ENCODE measurements at regions of chr17 and their contacts with region 1.

Region 1: GRCh38 chr17:39153599-39154051 is 2.2 kb upstream of the PLXDC1 start:
- DNase-seq: peak; percentile 94
- ATAC-seq: peak; percentile 43
- H3K4me3 Mint-ChIP-seq: peak overlapping the region; percentile 95
- H3K27ac Mint-ChIP-seq: peak overlapping the region; percentile 95
- H3K4me1 Mint-ChIP-seq: peaks cover 40% of the 10 kb centered on the region
- H3K27me3 Mint-ChIP-seq: peaks cover 2% of the 10 kb centered on the region

Region 2: GRCh38 chr17:38752119-38752929 is 401.3 kb before region 1 on chr17 and contains the start of gene PSMB3:
- CTCF ChIA-PET with region 1: no interaction called
- POLR2A ChIA-PET with region 1: no interaction called
- intact Hi-C with region 1: loop called (anchors 1 kb)
- DNase-seq: peak; percentile 99
- ATAC-seq: peak; percentile 95
- H3K4me3 Mint-ChIP-seq: peak within 1 kb of the TSS; percentile 93
- H3K27ac Mint-ChIP-seq: peak within 1 kb of the TSS; percentile 99
- H3K4me1 Mint-ChIP-seq: peaks cover 43% of the 10 kb centered on the region
- H3K27me3 Mint-ChIP-seq: peaks cover 23% of the 10 kb centered on the region
- total RNA-seq, gene PSMB3: 337 to 396 TPM

Region 3: DNA sequence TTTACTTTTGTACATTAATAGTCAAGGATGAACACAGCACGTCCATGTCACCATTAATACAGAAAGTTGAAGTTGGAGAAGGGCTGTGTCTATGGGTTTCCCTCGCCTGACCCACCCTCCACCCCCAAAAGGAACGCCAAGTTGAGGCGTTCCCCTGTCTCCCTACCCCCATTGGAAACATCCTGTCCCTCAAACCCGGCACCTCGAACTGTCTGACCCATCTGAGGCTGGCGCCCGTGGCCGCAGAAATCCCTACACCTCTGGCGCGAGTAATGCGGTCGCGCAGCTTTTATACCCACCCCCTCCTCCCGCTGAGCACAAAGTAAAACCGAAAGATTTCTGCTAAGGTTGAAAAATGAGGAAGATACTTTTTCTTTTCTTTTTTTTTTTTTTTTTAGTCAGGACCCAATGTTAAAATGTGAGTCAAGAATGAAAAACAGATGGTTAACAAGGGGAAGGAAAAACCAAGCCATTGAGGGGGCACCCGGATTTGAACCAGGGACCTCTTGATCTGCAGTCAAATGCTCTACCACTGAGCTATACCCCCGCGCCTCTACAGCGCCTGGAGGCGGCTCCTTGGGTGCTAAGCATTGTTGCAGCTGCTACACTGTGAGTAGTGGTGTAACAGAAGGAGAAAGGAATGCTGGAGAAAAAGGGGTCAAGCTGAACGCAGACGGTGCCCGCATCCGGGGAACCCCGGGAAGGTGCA is 284.7 kb before region 1 on chr17:
- CTCF ChIA-PET with region 1: interaction called, 9 read pairs
- POLR2A ChIA-PET with region 1: interaction called, 5 read pairs
- intact Hi-C with region 1: loop called (anchors 1 kb)
- DNase-seq: peak; percentile 95
- ATAC-seq: peak; percentile 56
- H3K4me3 Mint-ChIP-seq: peak overlapping the region; percentile 93
- H3K27ac Mint-ChIP-seq: peak overlapping the region; percentile 93
- H3K4me1 Mint-ChIP-seq: peaks cover 44% of the 10 kb centered on the region
- H3K27me3 Mint-ChIP-seq: peaks cover 2% of the 10 kb centered on the region

Region 4: DNA sequence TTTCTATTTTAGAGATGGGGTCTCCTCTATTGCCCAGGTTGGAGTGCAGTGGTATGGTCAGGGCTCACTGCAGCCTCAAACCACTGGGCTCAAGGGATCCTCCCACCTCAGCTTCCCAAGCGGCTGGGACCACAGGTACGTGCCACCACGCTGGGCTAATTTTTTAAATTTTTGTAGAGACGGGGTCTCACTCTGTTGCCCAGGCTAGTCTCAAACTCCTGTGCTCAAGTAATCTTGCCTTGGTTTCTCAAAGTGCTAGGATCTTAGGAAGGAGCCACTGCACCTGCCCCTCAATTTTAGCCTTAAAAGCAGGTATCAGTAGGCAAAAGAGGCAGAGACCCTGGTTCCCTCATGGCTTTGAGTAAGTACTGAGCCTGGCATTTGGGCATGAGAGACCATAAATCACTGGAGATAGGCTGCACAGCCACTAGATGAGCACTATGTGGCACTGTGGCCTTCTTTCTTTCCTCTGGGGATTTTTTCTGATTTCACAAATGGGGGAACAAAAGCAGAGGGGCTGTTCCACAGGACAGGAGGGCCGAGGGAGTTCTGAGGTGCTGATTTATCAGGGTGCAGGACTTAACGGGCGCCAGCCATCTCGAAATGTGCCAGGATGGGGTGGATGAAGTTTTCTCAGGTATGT is 84.4 kb before region 1 on chr17:
- CTCF ChIA-PET with region 1: interaction called, 14 read pairs
- POLR2A ChIA-PET with region 1: no interaction called
- intact Hi-C with region 1: loop called (anchors 1 kb)
- DNase-seq: peak; percentile 27
- ATAC-seq: peak; percentile 83
- H3K4me3 Mint-ChIP-seq: no peak overlapping the region
- H3K27ac Mint-ChIP-seq: no peak overlapping the region
- H3K4me1 Mint-ChIP-seq: peaks cover 4% of the 10 kb centered on the region
- H3K27me3 Mint-ChIP-seq: no peaks in the 10 kb centered on the region

Region 5: DNA sequence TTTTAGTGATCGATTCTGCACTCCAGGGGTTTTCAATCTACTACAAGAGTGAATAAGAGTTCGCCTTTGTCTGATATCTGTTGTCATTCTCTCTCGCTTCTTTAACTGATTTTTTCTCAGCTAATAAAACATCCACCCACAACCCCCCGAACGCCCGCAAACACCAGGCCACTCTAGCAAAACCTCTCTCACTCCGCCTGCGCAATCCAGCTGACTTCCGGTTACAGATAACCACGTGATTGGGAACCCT is 46.1 kb after region 1 on chr17:
- CTCF ChIA-PET with region 1: interaction called, 9 read pairs
- POLR2A ChIA-PET with region 1: interaction called, 3 read pairs
- intact Hi-C with region 1: loop called (anchors 1 to 5 kb)
- DNase-seq: peak; percentile 95
- ATAC-seq: peak; percentile 69
- H3K4me3 Mint-ChIP-seq: peak overlapping the region; percentile 98
- H3K27ac Mint-ChIP-seq: peak overlapping the region; percentile 100
- H3K4me1 Mint-ChIP-seq: peaks cover 51% of the 10 kb centered on the region
- H3K27me3 Mint-ChIP-seq: no peaks in the 10 kb centered on the region

Measured in activated CD4-positive, alpha-beta T cell treated with anti-CD3 and anti-CD28 coated beads for 36 hours (primary cell).